OCI-LY7 (cell line): ENCODE measurements at regions of chr7 and their contacts with region 1.

Region 1: DNA sequence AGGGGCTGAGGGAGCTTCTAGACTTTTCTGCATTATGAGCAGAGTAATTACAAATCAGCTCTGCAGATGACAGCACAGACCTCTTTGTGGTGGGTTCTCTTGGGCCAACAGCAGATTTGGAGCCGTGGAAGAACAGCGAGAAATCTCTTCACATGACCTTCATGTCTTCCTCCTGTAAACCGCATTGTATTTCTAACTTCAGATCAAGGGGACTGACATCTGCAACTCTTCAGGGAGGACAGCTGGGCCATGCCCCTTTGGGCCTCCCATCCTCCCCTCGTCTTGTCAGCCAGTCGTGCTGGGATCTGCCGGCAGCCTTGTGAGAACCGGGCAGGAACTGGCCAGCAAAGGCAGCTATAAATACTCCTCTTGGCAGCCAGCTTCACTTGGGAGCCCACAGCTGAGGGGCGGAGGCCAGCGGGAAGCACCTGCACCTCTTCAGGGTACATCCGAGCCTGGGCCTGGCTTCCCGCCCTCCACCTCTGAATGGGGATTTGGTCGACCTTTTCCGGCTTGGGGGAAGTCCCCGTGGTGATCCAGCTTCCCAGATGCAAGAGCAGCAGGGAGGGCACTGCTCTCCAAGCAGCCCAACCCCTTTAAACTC is 54.7 kb downstream of the STEAP1B start:
- DNase-seq: peak; percentile 93
- H3K4me3 ChIP-seq: peak overlapping the region; percentile 51
- H3K27ac ChIP-seq: peak overlapping the region; percentile 98
- H3K4me1 ChIP-seq: peaks cover 87% of the 10 kb centered on the region
- CTCF ChIP-seq: no peak

Region 2: GRCh38 chr7:21927693-21928092 is 517.5 kb before region 1 on chr7:
- CTCF ChIA-PET with region 1: no interaction called
- POLR2A ChIA-PET with region 1: no interaction called
- intact Hi-C with region 1: no loop called
- DNase-seq: no peak
- H3K4me3 ChIP-seq: no peak overlapping the region
- H3K27ac ChIP-seq: no peak overlapping the region
- H3K4me1 ChIP-seq: no peaks in the 10 kb centered on the region
- CTCF ChIP-seq: no peak

Region 3: GRCh38 chr7:22255834-22256233 is 189.4 kb before region 1 on chr7:
- CTCF ChIA-PET with region 1: no interaction called
- POLR2A ChIA-PET with region 1: no interaction called
- intact Hi-C with region 1: no loop called
- DNase-seq: no peak
- H3K4me3 ChIP-seq: no peak overlapping the region
- H3K27ac ChIP-seq: no peak overlapping the region
- H3K4me1 ChIP-seq: no peaks in the 10 kb centered on the region
- CTCF ChIP-seq: no peak

Region 4: DNA sequence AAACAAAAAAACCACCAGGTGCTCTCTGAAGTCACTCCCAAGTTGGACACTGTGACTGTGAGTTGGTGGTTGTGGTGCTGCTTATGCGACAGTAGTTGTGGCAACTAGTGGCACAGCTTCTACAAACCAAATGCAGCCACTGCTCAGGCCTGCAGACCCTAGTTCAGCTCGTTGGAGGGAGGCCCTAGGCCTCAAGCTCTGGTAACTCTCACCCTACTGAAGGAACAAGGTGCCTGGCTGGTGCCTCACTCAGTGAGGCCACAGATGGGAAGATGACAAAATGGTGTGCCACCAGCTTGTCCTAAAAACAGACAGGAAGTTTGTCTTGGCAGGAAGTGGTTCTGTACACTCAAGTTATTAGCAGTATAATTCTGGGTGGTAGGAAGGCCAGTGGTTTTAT is 43.0 kb before region 1 on chr7:
- CTCF ChIA-PET with region 1: no interaction called
- POLR2A ChIA-PET with region 1: interaction called, 28 read pairs
- intact Hi-C with region 1: no loop called
- DNase-seq: peak; percentile 72
- H3K4me3 ChIP-seq: peak overlapping the region; percentile 24
- H3K27ac ChIP-seq: peak overlapping the region; percentile 75
- H3K4me1 ChIP-seq: peaks cover 33% of the 10 kb centered on the region
- CTCF ChIP-seq: no peak

Region 5: DNA sequence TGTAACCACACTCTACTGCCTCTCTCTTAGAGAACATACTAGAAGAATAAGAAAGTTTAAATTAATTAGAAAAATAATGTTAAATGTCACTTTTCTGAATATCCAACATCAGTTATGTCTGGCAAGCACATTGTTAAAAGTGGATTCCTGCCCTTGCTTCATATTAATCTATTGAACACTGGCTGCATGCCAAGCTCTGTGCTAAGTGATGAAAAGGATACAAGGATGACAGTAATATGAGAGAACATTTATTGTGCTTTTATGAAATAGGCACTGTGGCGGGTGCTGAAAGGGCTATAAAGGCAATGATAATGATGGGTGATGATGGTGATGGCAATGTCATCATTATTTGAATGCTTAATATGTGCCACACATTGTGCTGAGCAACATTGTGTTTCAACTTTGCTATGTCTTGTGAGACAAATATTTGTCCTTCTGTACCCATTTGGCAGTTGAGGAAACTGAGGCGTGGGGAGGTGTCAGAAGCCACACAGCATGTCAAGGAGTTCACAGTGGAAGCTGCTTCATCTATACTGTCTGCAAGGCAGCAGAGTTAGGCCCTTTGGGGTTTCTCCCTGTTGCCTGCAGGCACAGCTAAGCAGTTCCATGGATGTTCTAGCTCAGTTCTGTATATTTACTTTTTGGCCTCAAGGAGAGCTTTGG is 24.1 kb before region 1 on chr7:
- CTCF ChIA-PET with region 1: interaction called, 5 read pairs
- POLR2A ChIA-PET with region 1: interaction called, 156 read pairs
- intact Hi-C with region 1: loop called (anchors 1 kb)
- DNase-seq: no peak
- H3K4me3 ChIP-seq: no peak overlapping the region
- H3K27ac ChIP-seq: peak overlapping the region; percentile 87
- H3K4me1 ChIP-seq: peaks cover 68% of the 10 kb centered on the region
- CTCF ChIP-seq: no peak

Region 6: DNA sequence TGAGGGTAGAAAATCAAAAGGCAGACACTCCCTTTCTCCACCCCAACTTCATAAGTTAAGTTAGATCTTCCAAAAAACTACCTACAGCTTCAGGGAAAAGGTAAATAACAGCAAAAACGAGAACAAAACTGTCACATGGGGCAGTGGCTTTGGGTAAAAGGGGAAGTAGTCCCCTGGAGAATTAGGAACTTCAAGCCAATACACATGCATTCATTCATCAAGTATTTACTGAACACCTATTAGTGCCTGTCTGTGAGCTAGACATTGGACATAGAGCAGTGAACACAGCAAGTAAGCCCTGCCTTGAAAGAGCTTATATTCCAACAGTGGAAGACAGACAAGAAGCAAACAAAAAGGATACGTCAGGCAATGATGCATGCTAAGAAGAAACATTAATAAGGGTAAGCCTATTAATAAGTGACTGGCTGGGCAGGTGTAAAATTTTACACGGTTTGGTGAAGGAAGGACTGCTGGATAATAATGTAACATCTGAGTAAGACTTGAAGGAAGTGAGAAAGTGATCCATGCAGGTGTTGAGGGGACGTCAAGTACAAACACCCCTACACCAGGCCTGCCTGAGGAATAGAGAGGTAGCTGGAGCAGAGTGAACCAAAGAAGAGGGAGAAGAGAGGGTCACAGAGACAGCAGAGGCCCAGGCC is 18.6 kb before region 1 on chr7:
- CTCF ChIA-PET with region 1: interaction called, 5 read pairs
- POLR2A ChIA-PET with region 1: interaction called, 156 read pairs
- intact Hi-C with region 1: loop called (anchors 1 kb)
- DNase-seq: peak; percentile 50
- H3K4me3 ChIP-seq: no peak overlapping the region
- H3K27ac ChIP-seq: peak overlapping the region; percentile 74
- H3K4me1 ChIP-seq: peaks cover 96% of the 10 kb centered on the region
- CTCF ChIP-seq: no peak

Region 7: GRCh38 chr7:22433710-22434460 is 11.4 kb before region 1 on chr7:
- CTCF ChIA-PET with region 1: interaction called, 5 read pairs
- POLR2A ChIA-PET with region 1: interaction called, 156 read pairs
- intact Hi-C with region 1: loop called (anchors 1 kb)
- DNase-seq: peak; percentile 60
- H3K4me3 ChIP-seq: no peak overlapping the region
- H3K27ac ChIP-seq: peak overlapping the region; percentile 99
- H3K4me1 ChIP-seq: peaks cover 97% of the 10 kb centered on the region
- CTCF ChIP-seq: peak; percentile 70

Region 8: GRCh38 chr7:22481726-22482125 is 36.5 kb after region 1 on chr7:
- CTCF ChIA-PET with region 1: no interaction called
- POLR2A ChIA-PET with region 1: interaction called, 4 read pairs
- intact Hi-C with region 1: loop called (anchors 2 kb)
- DNase-seq: peak; percentile 88
- H3K4me3 ChIP-seq: peak overlapping the region; percentile 38
- H3K27ac ChIP-seq: peak overlapping the region; percentile 62
- H3K4me1 ChIP-seq: peaks cover 48% of the 10 kb centered on the region
- CTCF ChIP-seq: no peak

Region 9: DNA sequence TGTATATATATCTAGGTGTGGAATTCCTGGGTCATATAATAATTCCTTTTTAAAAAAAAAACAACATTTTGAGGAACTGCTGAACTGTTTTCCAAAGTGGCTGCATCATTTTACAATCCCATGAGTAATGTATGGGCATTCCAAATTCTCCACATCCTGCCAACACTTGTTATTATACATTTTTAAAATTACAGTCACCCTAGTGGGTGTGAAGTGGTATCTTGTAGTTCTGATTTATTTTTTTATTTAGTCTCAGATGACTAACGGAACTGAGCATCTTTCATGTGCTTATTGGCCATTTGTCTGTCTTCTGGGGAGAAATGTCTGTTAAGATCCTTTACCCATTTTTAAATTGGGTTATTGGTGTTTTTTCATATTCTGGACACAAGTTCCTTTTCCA is 648.3 kb after region 1 on chr7:
- CTCF ChIA-PET with region 1: no interaction called
- POLR2A ChIA-PET with region 1: no interaction called
- intact Hi-C with region 1: no loop called
- DNase-seq: no peak
- H3K4me3 ChIP-seq: no peak overlapping the region
- H3K27ac ChIP-seq: no peak overlapping the region
- H3K4me1 ChIP-seq: no peaks in the 10 kb centered on the region
- CTCF ChIP-seq: no peak